A549 (cell line): ENCODE measurements at regions of chr7 and their contacts with region 1.

Region 1: GRCh38 chr7:34596892-34597291 is 61.1 kb upstream of the NPSR1 start:
- DNase-seq: peak in 1 of 2 experiments; percentile 25
- ATAC-seq: peak in 1 of 2 experiments; percentile 65; a peak in 3 of 6 replicates
- H3K4me3 ChIP-seq: no peak overlapping the region
- H3K27ac ChIP-seq: no peak overlapping the region
- H3K4me1 ChIP-seq: no peaks in the 10 kb centered on the region
- CTCF ChIP-seq: peak; percentile 46
- EP300 ChIP-seq: no peak
- POLR2A ChIP-seq: no peak
- RAD21 ChIP-seq: peak; percentile 63 to 78

Region 2: DNA sequence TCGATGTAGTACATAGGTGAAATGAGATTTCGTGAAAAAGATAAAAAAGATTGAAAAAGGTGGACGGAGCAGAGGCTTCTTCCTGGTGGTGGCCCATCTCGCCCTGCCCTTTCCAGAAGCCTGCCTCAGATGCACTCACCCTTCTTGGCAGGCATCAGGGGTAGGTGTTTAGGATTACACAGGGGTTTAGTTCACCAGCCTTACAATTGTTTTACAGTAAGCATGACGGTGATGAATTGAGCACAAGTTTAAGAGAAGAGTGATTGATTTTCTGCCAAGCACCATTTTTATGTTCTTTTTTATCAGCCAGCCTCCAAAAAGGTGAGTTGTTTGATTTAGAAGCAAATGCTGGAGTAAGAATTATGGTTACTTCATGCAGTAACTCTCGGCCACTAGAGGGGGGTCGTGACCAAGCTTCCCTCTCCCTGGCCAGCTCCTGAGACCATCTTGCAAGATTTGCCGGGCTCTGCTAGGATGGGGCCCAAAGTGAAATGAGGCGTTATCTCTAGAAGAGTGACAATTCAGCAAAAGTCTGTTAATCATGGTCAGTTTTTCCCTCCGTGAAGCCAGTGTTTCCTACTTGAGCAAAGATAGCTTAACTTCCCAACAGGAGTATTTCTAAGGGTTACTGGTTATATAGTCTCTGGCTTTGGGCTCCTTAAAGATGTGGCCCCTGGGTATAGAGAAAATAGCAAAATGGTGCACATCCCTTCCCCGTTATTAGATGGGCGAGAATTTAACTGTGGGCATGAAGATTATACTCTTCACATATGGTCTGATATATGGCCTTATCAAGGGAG is 462.7 kb before region 1 on chr7:
- CTCF ChIA-PET with region 1: interaction called, 10 read pairs
- POLR2A ChIA-PET with region 1: no interaction called
- DNase-seq: peak; percentile 64 to 76
- ATAC-seq: peak; percentile 83 to 95
- H3K4me3 ChIP-seq: no peak overlapping the region
- H3K27ac ChIP-seq: peak overlapping the region; percentile 35 to 75
- H3K4me1 ChIP-seq: peaks cover 23% of the 10 kb centered on the region; the same call in 2 of the 3 replicates
- CTCF ChIP-seq: peak; percentile 77
- EP300 ChIP-seq: no peak
- POLR2A ChIP-seq: no peak
- RAD21 ChIP-seq: peak; percentile 94

Region 3: GRCh38 chr7:34584526-34584925 is 12.4 kb before region 1 on chr7:
- CTCF ChIA-PET with region 1: interaction called, 10 read pairs
- POLR2A ChIA-PET with region 1: no interaction called
- DNase-seq: no peak
- ATAC-seq: no peak
- H3K4me3 ChIP-seq: no peak overlapping the region
- H3K27ac ChIP-seq: no peak overlapping the region
- H3K4me1 ChIP-seq: no peaks in the 10 kb centered on the region
- CTCF ChIP-seq: no peak
- EP300 ChIP-seq: no peak
- POLR2A ChIP-seq: no peak
- RAD21 ChIP-seq: no peak

Region 4: GRCh38 chr7:34622182-34622581 is 25.3 kb after region 1 on chr7:
- CTCF ChIA-PET with region 1: no interaction called
- POLR2A ChIA-PET with region 1: no interaction called
- DNase-seq: no peak
- ATAC-seq: no peak
- H3K4me3 ChIP-seq: no peak overlapping the region
- H3K27ac ChIP-seq: no peak overlapping the region
- H3K4me1 ChIP-seq: no peaks in the 10 kb centered on the region
- CTCF ChIP-seq: no peak
- EP300 ChIP-seq: no peak
- POLR2A ChIP-seq: no peak
- RAD21 ChIP-seq: no peak